CD8-positive, alpha-beta T cell (primary cell): ENCODE measurements at regions of chr9 and their contacts with region 1.

Region 1: DNA sequence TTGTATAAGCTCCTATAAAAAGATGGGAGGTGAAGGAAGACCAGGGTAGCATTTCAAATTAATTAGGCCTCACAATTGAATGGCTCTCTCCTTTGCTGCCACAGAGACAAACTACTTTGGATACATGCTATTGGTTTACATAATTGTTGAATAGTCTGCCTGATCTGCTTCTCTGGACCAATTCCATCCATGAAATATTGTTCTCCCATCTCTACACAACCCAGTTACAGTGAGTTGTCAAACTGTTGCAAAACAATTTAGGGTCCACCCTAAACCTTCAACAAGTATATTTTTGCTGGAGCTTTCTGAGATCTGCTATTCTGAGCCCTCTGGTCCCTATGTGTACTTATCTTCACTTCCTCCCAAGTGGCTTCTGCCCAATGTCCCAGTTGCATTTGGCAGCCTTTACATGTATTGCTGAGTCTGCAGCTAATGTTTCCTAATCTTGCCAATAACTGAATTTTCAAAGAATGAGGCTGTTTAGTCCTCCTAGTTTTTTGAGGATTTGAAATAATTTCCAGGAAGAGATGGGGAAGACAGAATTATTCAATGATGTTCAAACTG is 38.9 kb downstream of the AGTPBP1 start:
- DNase-seq: no peak
- ATAC-seq: no peak
- H3K4me3 ChIP-seq: no peak overlapping the region
- H3K4me3 Mint-ChIP-seq: no peak overlapping the region
- H3K27ac ChIP-seq: no peak overlapping the region
- H3K27ac Mint-ChIP-seq: no peak overlapping the region
- H3K4me1 ChIP-seq: peaks cover 5% of the 10 kb centered on the region
- H3K4me1 Mint-ChIP-seq: peaks cover 47% of the 10 kb centered on the region
- H3K27me3 ChIP-seq: no peaks in the 10 kb centered on the region
- H3K27me3 Mint-ChIP-seq: no peaks in the 10 kb centered on the region
- CTCF ChIP-seq: no peak

Region 2: GRCh38 chr9:85688361-85688760 is 14.4 kb before region 1 on chr9:
- CTCF ChIA-PET with region 1: interaction called, 15 read pairs
- POLR2A ChIA-PET with region 1: no interaction called
- intact Hi-C with region 1: no loop called
- DNase-seq: no peak
- ATAC-seq: no peak
- H3K4me3 ChIP-seq: no peak overlapping the region
- H3K4me3 Mint-ChIP-seq: no peak overlapping the region
- H3K27ac ChIP-seq: no peak overlapping the region
- H3K27ac Mint-ChIP-seq: no peak overlapping the region
- H3K4me1 ChIP-seq: no peaks in the 10 kb centered on the region
- H3K4me1 Mint-ChIP-seq: peaks cover 23% of the 10 kb centered on the region
- H3K27me3 ChIP-seq: no peaks in the 10 kb centered on the region
- H3K27me3 Mint-ChIP-seq: no peaks in the 10 kb centered on the region
- CTCF ChIP-seq: no peak

Region 3: DNA sequence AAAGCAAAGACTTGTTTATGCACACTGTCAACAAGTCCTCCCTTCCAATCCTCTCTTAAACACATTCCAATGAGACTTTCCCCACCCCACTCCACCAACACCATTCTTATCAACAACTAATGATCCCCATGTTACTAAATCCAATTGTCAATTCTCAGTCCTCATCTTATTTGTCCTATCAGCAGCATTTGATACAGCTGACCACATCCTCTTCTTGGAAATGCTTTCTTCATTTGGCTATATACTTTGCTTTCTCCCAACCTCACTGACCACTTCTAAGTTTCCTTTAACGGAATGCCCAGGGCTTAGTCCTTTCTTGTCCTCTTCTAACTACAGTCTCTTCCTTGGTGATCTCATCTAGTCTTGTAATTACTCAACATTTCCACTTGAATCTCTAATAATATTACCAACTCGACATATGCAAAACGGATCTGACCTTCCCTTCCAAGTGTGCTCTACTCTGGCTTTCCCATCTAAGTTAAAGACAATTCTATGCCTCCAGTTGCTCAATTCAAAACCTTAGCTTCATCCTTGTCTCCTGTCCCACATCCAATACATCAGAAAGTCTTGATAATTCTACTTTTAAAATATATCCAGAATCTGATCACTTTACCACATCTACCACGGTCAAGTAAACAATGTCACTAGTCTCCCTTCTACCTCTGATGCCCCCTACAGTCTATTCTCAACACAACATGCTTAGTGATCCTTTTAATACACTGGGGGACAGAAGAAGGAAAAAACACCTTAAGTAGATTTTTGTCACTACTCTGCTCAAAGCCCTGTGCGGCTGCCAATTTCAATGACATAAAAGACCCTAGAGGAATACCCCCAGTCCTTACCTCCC is 13.4 kb after region 1 on chr9:
- CTCF ChIA-PET with region 1: interaction called, 7 read pairs
- POLR2A ChIA-PET with region 1: interaction called, 3 read pairs
- intact Hi-C with region 1: loop called in 1 of 2 experiments (anchors 2 kb)
- DNase-seq: peak in 2 of 9 experiments; percentile 28 to 51
- ATAC-seq: peak; percentile 20
- H3K4me3 ChIP-seq: peak overlapping the region in 1 of 2 experiments; percentile 10
- H3K4me3 Mint-ChIP-seq: peak overlapping the region; percentile 4
- H3K27ac ChIP-seq: peak overlapping the region in 1 of 2 experiments; percentile 81
- H3K27ac Mint-ChIP-seq: peak overlapping the region; percentile 79
- H3K4me1 ChIP-seq: peaks cover 15% of the 10 kb centered on the region
- H3K4me1 Mint-ChIP-seq: peaks cover 57% of the 10 kb centered on the region
- H3K27me3 ChIP-seq: no peaks in the 10 kb centered on the region
- H3K27me3 Mint-ChIP-seq: no peaks in the 10 kb centered on the region
- CTCF ChIP-seq: no peak

Region 4: DNA sequence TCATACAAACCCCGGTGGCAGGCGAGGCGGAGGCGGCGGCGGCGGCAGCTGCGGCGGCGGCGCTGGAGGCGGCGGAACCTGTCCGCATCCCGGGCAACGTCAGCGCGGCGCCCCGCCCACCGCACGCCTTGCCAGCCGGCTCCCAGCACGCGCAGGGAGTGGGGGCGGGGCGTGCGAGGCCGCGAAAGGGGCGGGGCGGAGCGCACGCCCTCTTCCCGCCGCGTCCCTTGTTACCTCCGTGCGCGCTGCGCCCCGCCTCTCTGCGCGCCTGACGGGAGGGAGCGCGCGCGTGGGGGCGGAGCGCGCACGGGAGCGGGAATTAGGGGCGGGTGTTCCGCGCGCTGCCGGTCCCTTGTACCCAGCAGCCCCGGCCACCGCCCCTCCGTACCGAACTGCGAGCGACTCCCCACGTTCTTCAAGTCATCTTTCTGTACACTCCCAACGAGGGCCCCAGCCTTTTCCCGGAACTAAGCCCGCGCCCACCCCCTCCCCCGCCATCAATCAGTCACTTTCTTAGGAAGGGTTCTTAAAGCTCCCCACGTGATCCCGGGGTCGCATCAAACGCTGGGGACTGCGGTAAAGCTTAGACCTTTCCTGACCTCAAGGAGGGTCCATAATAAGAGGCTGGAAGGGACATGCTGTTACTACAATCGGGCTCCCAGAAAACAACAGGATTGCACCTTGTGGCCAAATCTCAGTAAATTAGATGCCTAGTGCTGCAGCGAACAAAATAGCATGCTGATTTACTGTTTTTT is 39.2 kb after region 1 on chr9 and contains the start of gene AGTPBP1:
- CTCF ChIA-PET with region 1: interaction called, 21 read pairs
- POLR2A ChIA-PET with region 1: interaction called, 4 read pairs
- intact Hi-C with region 1: loop called (anchors 1 to 2 kb)
- DNase-seq: peak; percentile 90 to 99 (median 97)
- ATAC-seq: peak; percentile 85
- H3K4me3 ChIP-seq: peak within 1 kb of the TSS; percentile 78 to 89
- H3K4me3 Mint-ChIP-seq: peak within 1 kb of the TSS; percentile 96
- H3K27ac ChIP-seq: peak within 1 kb of the TSS; percentile 83 to 93
- H3K27ac Mint-ChIP-seq: peak within 1 kb of the TSS; percentile 98
- H3K4me1 ChIP-seq: peaks cover 12% of the 10 kb centered on the region
- H3K4me1 Mint-ChIP-seq: peaks cover 40% of the 10 kb centered on the region
- H3K27me3 ChIP-seq: no peaks in the 10 kb centered on the region
- H3K27me3 Mint-ChIP-seq: no peaks in the 10 kb centered on the region
- CTCF ChIP-seq: no peak
- total RNA-seq, gene AGTPBP1: 58.3 to 58.4 TPM

Region 5: DNA sequence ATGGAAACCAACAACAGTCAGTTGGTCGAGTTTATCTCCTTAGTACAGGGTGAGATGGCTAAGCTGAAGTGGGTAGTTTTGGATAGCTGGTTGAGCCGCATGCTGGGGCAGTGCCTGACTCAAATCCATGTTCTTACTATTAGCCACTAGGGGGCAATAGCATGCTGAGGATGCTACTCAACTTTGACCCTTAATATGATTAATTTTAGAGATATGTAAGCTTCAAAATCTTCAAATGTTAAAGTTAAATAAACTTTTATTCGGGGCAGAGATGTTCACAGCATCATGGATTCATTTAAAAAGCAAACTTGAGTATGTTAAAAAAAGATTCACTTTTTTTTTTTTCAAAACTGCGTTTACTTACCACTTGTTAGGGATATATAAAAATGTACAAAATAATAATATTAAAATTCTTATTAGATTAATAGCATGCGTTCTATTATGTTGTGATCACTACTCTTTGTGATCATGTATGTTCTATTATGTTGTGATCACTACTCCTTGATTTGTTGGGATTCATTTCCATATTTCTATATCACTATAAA is 499.6 kb after region 1 on chr9:
- CTCF ChIA-PET with region 1: no interaction called
- POLR2A ChIA-PET with region 1: no interaction called
- intact Hi-C with region 1: no loop called
- DNase-seq: peak in 4 of 9 experiments; percentile 17 to 63 (median 33)
- ATAC-seq: peak; percentile 46
- H3K4me3 ChIP-seq: no peak overlapping the region
- H3K4me3 Mint-ChIP-seq: no peak overlapping the region
- H3K27ac ChIP-seq: no peak overlapping the region
- H3K27ac Mint-ChIP-seq: no peak overlapping the region
- H3K4me1 ChIP-seq: no peaks in the 10 kb centered on the region
- H3K4me1 Mint-ChIP-seq: no peaks in the 10 kb centered on the region
- H3K27me3 ChIP-seq: no peaks in the 10 kb centered on the region
- H3K27me3 Mint-ChIP-seq: peaks cover 2% of the 10 kb centered on the region
- CTCF ChIP-seq: peak; percentile 81